Gastrocnemius medialis (tissue), 4 donors: ENCODE measurements at regions of chr11 and their contacts with region 1.

Region 1: DNA sequence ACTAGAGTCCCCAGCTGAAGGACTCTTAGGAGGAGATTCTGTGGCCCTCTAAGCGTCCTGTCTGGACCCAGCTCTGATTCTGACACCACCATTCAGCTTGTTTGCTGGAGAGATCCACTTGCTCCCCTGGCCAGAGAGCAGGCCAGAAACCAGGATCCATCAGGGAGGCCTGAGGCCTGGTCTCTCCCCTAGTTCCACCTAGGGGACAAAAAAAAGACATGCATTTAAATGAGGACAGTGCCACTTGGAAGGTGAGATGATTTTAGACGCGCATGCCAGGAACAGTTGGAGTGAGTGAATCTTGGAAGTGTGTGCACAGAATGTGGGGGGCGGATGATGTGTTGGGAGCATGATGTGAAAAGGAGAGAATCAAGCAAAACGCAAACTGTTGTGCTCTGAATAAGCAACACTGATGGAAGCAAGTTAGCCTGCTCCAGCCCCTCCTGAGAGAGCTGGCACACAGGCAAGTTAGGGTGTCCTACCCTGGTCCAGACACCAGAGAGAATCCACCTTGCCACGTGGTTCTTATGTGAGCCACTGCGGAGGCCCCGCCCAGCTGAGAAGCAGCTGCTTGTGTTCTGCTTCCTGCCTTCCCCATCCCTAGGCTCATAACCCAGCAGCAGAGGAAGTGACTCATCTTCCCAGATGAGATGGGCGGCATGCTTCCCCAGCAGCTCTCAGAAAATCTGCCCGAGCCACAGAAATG is 8.0 kb upstream of the SLCO2B1 start:
- DNase-seq: peak; percentile 50 to 58
- ATAC-seq: peak; percentile 53 to 66
- H3K4me3 ChIP-seq: no peak overlapping the region
- H3K27ac ChIP-seq: no peak overlapping the region
- H3K4me1 ChIP-seq: peaks cover 0 to 7% of the 10 kb centered on the region in 2 donors
- H3K27me3 ChIP-seq: no peaks in the 10 kb centered on the region
- CTCF ChIP-seq: no peak
- POLR2A ChIP-seq: no peak

Region 2: DNA sequence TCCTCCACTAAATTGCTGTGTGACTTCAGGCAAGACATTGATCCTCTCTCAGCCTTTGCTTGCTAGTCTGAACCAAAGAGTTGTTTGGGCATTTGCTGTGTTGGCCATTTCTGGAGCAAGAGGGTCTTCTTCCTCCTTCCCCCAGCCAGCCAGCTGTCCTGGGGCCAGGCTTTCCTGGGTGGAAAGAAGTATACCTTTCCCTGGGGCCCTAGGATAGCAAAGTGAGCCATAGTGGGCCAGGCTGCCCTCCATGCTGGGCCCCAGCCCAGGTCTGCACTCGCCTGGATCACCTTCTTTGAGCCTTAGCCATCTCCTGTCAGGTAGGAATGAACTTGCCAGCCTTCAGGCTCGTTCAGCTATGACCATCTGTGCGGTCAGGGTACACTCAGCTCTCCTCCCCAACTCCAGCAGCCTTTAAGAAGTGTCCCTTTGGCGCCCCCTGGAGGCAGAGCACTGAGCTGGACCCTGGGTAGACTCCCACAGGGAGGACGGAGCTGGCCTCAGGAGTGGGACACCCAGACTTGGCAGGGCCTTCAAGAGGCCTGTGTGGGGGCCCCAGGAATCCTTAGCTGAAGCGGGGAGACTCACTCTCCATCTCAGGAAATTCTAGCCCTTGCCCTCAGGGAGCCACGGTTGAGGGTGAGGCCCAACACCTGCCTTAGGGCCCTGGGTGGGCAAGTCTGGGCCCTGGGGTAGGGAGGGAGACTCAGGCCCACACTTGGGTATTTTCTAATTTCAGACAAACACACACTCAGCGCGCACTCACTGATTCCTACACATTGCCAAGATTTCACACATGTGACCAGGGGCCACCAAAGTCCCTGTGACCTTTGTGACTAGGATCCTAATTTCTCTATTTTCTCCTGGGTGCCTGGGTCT is 62.1 kb after region 1 on chr11:
- in situ Hi-C with region 1: loop called in 3 of 4 experiments (anchors 5 kb)
- intact Hi-C with region 1: loop called (anchors 1 kb)
- DNase-seq: peak; percentile 49 to 68
- ATAC-seq: peak; percentile 81 to 92
- H3K4me3 ChIP-seq: no peak overlapping the region
- H3K27ac ChIP-seq: no peak overlapping the region
- H3K4me1 ChIP-seq: no peaks in the 10 kb centered on the region
- H3K27me3 ChIP-seq: no peaks in the 10 kb centered on the region
- CTCF ChIP-seq: peak; percentile 60 to 87 (median 82)
- POLR2A ChIP-seq: no peak

Region 3: GRCh38 chr11:75248690-75249268 is 105.9 kb after region 1 on chr11:
- in situ Hi-C with region 1: loop called in 3 of 4 experiments (anchors 5 kb)
- intact Hi-C with region 1: loop called (anchors 1 kb)
- DNase-seq: peak; percentile 63 to 76
- ATAC-seq: peak; percentile 91 to 99
- H3K4me3 ChIP-seq: no peak overlapping the region
- H3K27ac ChIP-seq: no peak overlapping the region
- H3K4me1 ChIP-seq: no peaks in the 10 kb centered on the region
- H3K27me3 ChIP-seq: peaks cover 0 to 6% (median 0%) of the 10 kb centered on the region in 3 donors
- CTCF ChIP-seq: peak; percentile 87 to 97 (median 94)
- POLR2A ChIP-seq: no peak

Region 4: GRCh38 chr11:75406338-75406777 is 263.5 kb after region 1 on chr11:
- in situ Hi-C with region 1: no loop called
- intact Hi-C with region 1: no loop called
- DNase-seq: no peak
- ATAC-seq: no peak
- H3K4me3 ChIP-seq: no peak overlapping the region
- H3K27ac ChIP-seq: no peak overlapping the region
- H3K4me1 ChIP-seq: peaks cover 19 to 23% of the 10 kb centered on the region in 2 donors
- H3K27me3 ChIP-seq: no peaks in the 10 kb centered on the region
- CTCF ChIP-seq: no peak
- POLR2A ChIP-seq: no peak